GM10248 (cell line): ENCODE measurements at regions of chr16 and their contacts with region 1.

Region 1: DNA sequence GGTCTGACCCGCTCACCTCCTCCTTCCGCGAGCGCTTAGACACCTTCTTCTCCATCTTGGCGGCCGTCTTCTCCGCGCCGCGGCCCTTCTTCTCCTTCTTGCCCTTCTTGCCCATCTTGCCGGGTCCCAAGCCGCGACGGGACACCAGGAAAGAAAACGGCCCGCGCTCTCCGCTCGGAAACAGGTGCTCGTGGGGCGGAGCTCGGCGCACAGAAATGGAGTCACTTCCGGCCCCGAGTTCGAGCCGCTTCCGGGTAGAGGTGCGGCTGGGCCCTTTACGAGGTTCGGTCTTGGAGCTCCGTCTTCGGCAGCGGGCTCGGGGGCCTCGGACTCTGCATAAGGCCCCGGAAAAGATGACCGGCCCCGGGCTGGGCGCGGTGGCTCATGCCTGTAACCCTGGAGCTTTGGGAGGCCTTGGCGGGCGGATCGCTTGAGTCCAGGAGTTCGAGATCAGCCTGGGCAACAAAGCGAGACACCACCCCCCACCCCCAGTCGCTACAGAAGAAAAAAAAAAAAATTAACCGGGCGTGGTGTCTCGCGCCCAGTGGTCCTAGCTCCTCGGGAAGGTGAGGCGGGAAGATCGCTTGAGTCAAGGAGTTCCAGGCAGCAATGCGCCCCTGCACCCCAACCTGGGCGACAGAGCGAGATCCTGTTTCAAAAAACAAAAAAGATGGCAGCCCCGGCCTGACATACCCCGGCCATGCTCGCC is at the start of gene KLHDC4:
- DNase-seq: peak; percentile 95
- CTCF ChIP-seq: no peak

Region 2: GRCh38 chr16:86789621-86790051 is 976.3 kb before region 1 on chr16:
- CTCF ChIA-PET with region 1: no interaction called
- POLR2A ChIA-PET with region 1: no interaction called
- DNase-seq: no peak
- CTCF ChIP-seq: no peak

Region 3: GRCh38 chr16:87583453-87584131 is 182.3 kb before region 1 on chr16:
- CTCF ChIA-PET with region 1: interaction called, 12 read pairs
- POLR2A ChIA-PET with region 1: no interaction called
- DNase-seq: no peak
- CTCF ChIP-seq: no peak

Region 4: GRCh38 chr16:87725596-87726235 is 40.2 kb before region 1 on chr16:
- CTCF ChIA-PET with region 1: interaction called, 14 read pairs
- POLR2A ChIA-PET with region 1: no interaction called
- DNase-seq: no peak
- CTCF ChIP-seq: no peak

Region 5: DNA sequence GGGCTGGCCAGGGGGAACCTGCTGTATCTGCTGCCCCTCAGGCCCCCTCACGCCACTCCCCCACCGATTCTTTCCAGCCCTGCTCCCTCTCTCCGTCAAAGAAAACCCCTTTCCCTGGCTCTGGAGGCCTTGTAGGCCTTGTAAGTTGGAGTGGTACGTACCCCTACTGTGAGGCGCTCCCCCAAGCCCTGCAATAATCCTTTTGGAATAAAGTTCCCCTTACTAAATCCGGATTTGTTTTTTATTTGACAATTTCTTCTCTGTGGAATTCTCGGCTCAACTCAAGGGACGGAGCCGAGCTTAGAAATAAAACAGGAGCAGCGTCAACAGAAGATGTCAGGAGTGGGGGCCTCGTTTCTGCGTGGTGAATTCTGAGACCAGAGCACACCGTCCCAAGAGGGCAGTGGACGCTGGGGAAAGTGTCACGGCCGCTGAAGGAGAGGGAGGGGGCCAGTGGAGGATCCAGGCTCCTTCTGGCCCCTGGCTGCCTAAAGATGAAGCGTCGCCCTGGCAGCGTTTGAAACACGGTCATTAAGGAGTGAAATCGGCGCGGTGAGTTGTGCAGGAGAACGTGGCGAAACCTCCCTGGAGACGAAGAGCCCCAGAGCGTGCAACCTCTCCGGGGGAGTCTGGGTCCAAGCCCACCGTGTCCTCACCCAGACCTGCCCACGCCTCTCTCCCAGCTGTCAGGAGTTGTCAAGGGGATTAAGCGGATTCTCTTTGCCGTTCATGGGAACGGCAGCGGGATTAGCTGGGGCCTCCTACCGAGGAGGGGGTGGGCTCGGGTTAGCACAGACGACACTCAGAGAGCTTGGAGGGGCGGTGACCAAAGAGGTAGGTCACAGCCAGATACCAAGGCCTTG is 56.4 kb after region 1 on chr16:
- CTCF ChIA-PET with region 1: no interaction called
- POLR2A ChIA-PET with region 1: no interaction called
- DNase-seq: no peak
- CTCF ChIP-seq: no peak